ENCODE measurements at regions of chr5 and their contacts with region 1.

Region 1: GRCh38 chr5:115575167-115576070 is 26.9 kb downstream of the TICAM2 start:
- DNase-seq: no peak
- H3K4me3 ChIP-seq: no peak overlapping the region
- H3K27ac ChIP-seq: no peak overlapping the region
- H3K4me1 ChIP-seq: no peaks in the 10 kb centered on the region
- H3K27me3 ChIP-seq: no peaks in the 10 kb centered on the region
- CTCF ChIP-seq: no peak
- EP300 ChIP-seq: no peak
- POLR2A ChIP-seq: no peak
- RAD21 ChIP-seq: no peak

Region 2: GRCh38 chr5:115231598-115231997 is 343.8 kb before region 1 on chr5:
- CTCF ChIA-PET with region 1: no interaction called
- POLR2A ChIA-PET with region 1: no interaction called
- DNase-seq: no peak
- H3K4me3 ChIP-seq: no peak overlapping the region
- H3K27ac ChIP-seq: no peak overlapping the region
- H3K4me1 ChIP-seq: no peaks in the 10 kb centered on the region
- H3K27me3 ChIP-seq: no peaks in the 10 kb centered on the region
- CTCF ChIP-seq: no peak
- EP300 ChIP-seq: no peak
- POLR2A ChIP-seq: no peak
- RAD21 ChIP-seq: no peak

Region 3: DNA sequence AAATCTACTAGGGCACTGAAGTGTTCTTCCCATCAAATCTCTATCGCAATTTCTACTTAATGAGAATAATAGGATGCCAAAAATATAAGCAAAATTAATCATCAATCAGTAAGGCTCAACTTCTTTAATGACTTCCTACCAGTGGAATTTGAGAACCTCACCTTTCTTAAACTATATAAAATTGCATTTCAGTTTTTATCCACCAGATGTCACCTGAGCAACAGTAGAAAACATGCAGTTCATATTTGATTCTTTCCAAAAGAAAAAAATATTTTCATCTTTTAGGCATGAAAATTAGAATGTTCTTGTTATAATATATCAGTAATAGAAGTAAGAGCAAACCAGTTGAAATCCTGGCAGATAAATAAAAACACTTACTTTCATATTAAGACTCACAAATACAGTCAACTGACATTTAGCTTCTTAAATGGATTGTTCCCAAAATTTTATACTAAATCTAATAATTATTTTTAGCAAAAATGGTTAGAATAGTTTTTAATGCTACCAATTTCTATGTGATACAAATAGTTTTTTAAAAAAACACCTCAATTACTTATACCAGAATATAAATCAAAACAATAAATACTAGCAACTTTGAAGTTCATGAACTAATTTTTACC is 265.6 kb before region 1 on chr5:
- CTCF ChIA-PET with region 1: interaction called, 138 read pairs
- POLR2A ChIA-PET with region 1: interaction called, 3 read pairs
- DNase-seq: no peak
- H3K4me3 ChIP-seq: no peak overlapping the region
- H3K27ac ChIP-seq: no peak overlapping the region
- H3K4me1 ChIP-seq: peaks cover 0 to 5% (median 0%) of the 10 kb centered on the region in 4 experiments; a peak in 2 of 7 replicates
- H3K27me3 ChIP-seq: no peaks in the 10 kb centered on the region
- CTCF ChIP-seq: peak in 2 of 3 experiments; percentile 24 to 42; a peak in 2 of 4 replicates
- EP300 ChIP-seq: no peak
- POLR2A ChIP-seq: no peak
- RAD21 ChIP-seq: peak in 1 of 2 experiments; percentile 63

Region 4: GRCh38 chr5:115377468-115378217 is 197.8 kb before region 1 on chr5:
- CTCF ChIA-PET with region 1: interaction called, 11 read pairs
- POLR2A ChIA-PET with region 1: no interaction called
- DNase-seq: no peak
- H3K4me3 ChIP-seq: no peak overlapping the region
- H3K27ac ChIP-seq: no peak overlapping the region
- H3K4me1 ChIP-seq: no peaks in the 10 kb centered on the region; a peak in 1 of 7 replicates
- H3K27me3 ChIP-seq: no peaks in the 10 kb centered on the region
- CTCF ChIP-seq: no peak; a peak in 1 of 4 replicates
- EP300 ChIP-seq: no peak
- POLR2A ChIP-seq: no peak
- RAD21 ChIP-seq: peak in 1 of 2 experiments; percentile 41; a peak in 2 of 4 replicates

Region 5: GRCh38 chr5:115389799-115390382 is 185.5 kb before region 1 on chr5:
- CTCF ChIA-PET with region 1: interaction called, 36 read pairs
- POLR2A ChIA-PET with region 1: no interaction called
- DNase-seq: peak; percentile 65 to 68
- H3K4me3 ChIP-seq: no peak overlapping the region
- H3K27ac ChIP-seq: no peak overlapping the region
- H3K4me1 ChIP-seq: no peaks in the 10 kb centered on the region
- H3K27me3 ChIP-seq: no peaks in the 10 kb centered on the region
- CTCF ChIP-seq: peak; percentile 76 to 92 (median 90)
- EP300 ChIP-seq: no peak
- POLR2A ChIP-seq: no peak
- RAD21 ChIP-seq: peak; percentile 78 to 87

Region 6: DNA sequence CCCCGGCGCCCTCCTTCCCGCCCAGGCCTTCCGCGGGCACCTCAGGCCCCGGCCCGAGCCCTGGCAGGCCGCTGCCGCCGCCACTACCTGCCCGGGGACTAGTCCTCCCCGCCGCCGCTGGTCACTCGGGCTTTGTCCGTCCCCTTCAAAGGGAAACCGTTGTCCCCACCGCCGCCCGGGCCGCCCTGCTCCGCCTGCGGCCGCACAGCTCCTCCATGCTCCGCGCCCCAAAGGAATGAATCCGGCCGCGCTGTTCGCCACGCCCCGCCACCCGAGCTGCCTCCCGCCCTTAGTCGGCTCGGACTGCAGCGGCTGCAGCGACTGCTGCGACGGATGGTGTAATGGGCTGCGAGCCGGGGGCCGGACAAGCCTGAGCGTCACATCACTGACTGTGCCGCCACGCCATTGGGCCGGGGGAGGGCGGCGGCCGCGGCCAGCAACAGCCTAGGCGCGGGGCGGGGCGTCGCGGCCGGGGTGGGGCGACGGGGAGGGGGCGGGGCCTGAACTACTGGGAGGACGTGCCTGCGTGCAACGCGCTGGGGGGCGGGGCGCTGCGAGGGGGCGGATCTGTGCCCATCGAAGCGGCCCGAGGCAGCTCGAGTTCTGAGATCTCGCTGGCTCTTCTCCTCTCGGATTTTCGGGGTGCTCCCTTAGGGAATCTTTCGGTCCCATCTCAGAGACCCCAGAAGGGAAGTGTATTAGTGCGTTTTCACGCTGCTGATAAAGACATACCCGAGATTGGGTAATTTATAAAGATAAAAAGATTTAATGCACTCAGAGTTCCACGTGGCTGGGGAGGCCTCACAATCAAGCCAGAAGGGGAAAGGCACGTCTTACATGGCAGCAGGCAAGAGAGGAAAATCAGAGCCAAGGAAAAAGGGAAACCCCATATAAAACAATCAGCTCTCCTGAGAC is 30.7 kb before region 1 on chr5 and contains the start of gene FEM1C:
- CTCF ChIA-PET with region 1: interaction called, 107 read pairs
- POLR2A ChIA-PET with region 1: interaction called, 6 read pairs
- DNase-seq: peak; percentile 86 to 97
- H3K4me3 ChIP-seq: peak within 1 kb of the TSS; percentile 81 to 97 (median 90)
- H3K27ac ChIP-seq: peak within 1 kb of the TSS; percentile 91
- H3K4me1 ChIP-seq: peaks cover 0 to 7% (median 2%) of the 10 kb centered on the region in 4 experiments; a peak in 5 of 7 replicates
- H3K27me3 ChIP-seq: no peaks in the 10 kb centered on the region
- CTCF ChIP-seq: no peak
- EP300 ChIP-seq: peak in 1 of 2 experiments; percentile 28; a peak in 1 of 3 replicates
- POLR2A ChIP-seq: peak; percentile 87 to 96
- RAD21 ChIP-seq: no peak
- total RNA-seq, gene FEM1C: 16.6 and 17.7 TPM in 2 replicates

Region 7: GRCh38 chr5:115551415-115551814 is 24.0 kb before region 1 on chr5:
- CTCF ChIA-PET with region 1: interaction called, 107 read pairs
- POLR2A ChIA-PET with region 1: no interaction called
- DNase-seq: no peak
- H3K4me3 ChIP-seq: no peak overlapping the region
- H3K27ac ChIP-seq: no peak overlapping the region
- H3K4me1 ChIP-seq: no peaks in the 10 kb centered on the region
- H3K27me3 ChIP-seq: no peaks in the 10 kb centered on the region
- CTCF ChIP-seq: no peak
- EP300 ChIP-seq: no peak
- POLR2A ChIP-seq: no peak
- RAD21 ChIP-seq: no peak

Region 8: GRCh38 chr5:115559524-115559923 is 15.9 kb before region 1 on chr5:
- CTCF ChIA-PET with region 1: interaction called, 107 read pairs
- POLR2A ChIA-PET with region 1: no interaction called
- DNase-seq: no peak
- H3K4me3 ChIP-seq: no peak overlapping the region
- H3K27ac ChIP-seq: no peak overlapping the region
- H3K4me1 ChIP-seq: peaks cover 3 to 6% (median 3%) of the 10 kb centered on the region in 4 experiments; a peak in 6 of 7 replicates
- H3K27me3 ChIP-seq: no peaks in the 10 kb centered on the region
- CTCF ChIP-seq: no peak
- EP300 ChIP-seq: no peak
- POLR2A ChIP-seq: no peak
- RAD21 ChIP-seq: no peak

Region 9: GRCh38 chr5:115625579-115626444 is 50.4 kb after region 1 on chr5 and contains the start of gene TMED7:
- CTCF ChIA-PET with region 1: no interaction called
- POLR2A ChIA-PET with region 1: no interaction called
- DNase-seq: peak; percentile 85 to 95
- H3K4me3 ChIP-seq: peak within 1 kb of the TSS; percentile 86 to 96 (median 94)
- H3K27ac ChIP-seq: peak within 1 kb of the TSS; percentile 30; the same call in 1 of the 2 replicates
- H3K4me1 ChIP-seq: no peaks in the 10 kb centered on the region; a peak in 2 of 7 replicates
- H3K27me3 ChIP-seq: no peaks in the 10 kb centered on the region
- CTCF ChIP-seq: no peak; a peak in 1 of 4 replicates
- EP300 ChIP-seq: no peak
- POLR2A ChIP-seq: no peak; a peak in 1 of 3 replicates
- RAD21 ChIP-seq: no peak; a peak in 1 of 4 replicates
- total RNA-seq, gene TMED7: 72.8 and 75.2 TPM in 2 replicates

Measured in H1 (cell line).